ENCODE measurements at regions of chr7 and their contacts with region 1.

Region 1: GRCh38 chr7:1065263-1066260 is 21.2 kb downstream of the GPR146 start:
- DNase-seq: peak; percentile 99
- H3K4me3 ChIP-seq: no peak overlapping the region; a peak in 1 of 4 replicates
- H3K27ac ChIP-seq: no peak overlapping the region
- H3K4me1 ChIP-seq: peaks cover 0 to 9% of the 10 kb centered on the region in 2 experiments; a peak in 1 of 4 replicates
- H3K27me3 ChIP-seq: no peaks in the 10 kb centered on the region
- CTCF ChIP-seq: peak; percentile 87
- EP300 ChIP-seq: no peak
- RAD21 ChIP-seq: peak; percentile 93

Region 2: GRCh38 chr7:831596-832166 is 233.9 kb before region 1 on chr7:
- CTCF ChIA-PET with region 1: no interaction called
- POLR2A ChIA-PET with region 1: no interaction called
- DNase-seq: no peak
- H3K4me3 ChIP-seq: peak overlapping the region in 1 of 2 experiments; percentile 27; a peak in 3 of 4 replicates
- H3K27ac ChIP-seq: peak overlapping the region; percentile 29 to 98; a peak in 3 of 4 replicates
- H3K4me1 ChIP-seq: peaks cover 20 to 26% of the 10 kb centered on the region in 2 experiments; a peak in 3 of 4 replicates
- H3K27me3 ChIP-seq: no peaks in the 10 kb centered on the region
- CTCF ChIP-seq: no peak
- EP300 ChIP-seq: peak in 1 of 2 experiments; percentile 71; a peak in 1 of 4 replicates
- RAD21 ChIP-seq: no peak

Region 3: GRCh38 chr7:985915-986741 is 79.4 kb before region 1 on chr7:
- CTCF ChIA-PET with region 1: interaction called, 756 read pairs
- POLR2A ChIA-PET with region 1: no interaction called
- DNase-seq: peak; percentile 70
- H3K4me3 ChIP-seq: no peak overlapping the region
- H3K27ac ChIP-seq: no peak overlapping the region
- H3K4me1 ChIP-seq: peaks cover 0 to 8% of the 10 kb centered on the region in 2 experiments; a peak in 1 of 4 replicates
- H3K27me3 ChIP-seq: no peaks in the 10 kb centered on the region
- CTCF ChIP-seq: no peak
- EP300 ChIP-seq: no peak
- RAD21 ChIP-seq: no peak

Region 4: DNA sequence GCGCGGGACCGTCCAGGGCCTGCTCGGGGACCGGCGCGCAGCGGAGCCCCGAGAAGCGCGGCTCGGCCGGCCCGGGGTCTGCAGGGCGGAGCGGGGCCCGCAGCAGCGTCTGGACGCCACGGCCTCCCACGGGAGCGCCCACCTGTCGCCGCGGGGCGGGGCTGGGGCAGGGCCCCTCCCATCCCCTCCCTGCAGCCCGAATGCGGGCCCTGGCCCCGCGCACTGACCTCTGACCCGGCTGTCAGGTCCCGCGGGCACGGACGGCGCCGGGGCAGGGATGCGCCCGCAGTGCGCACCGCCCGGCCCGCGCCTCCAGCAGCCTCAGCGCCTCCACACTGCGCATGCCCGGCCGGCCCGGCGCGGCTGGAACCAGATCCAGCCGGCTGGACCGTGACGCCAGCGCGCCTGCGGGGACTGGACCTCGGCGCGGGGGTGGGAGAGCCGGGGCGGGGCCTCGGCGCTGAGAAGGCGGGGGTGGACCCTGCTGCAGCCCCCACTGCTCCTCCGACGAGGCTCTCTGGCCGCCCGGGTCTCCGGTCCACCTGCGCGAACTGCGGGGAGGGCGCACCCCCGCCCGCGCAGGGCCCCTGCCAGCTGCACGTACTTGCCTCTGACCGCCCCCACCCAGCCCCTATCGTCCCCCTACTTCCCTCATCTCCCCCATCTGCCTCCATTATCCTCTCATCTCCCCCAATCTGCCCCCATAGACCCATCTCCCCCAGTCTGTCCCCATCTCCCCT is 37.4 kb before region 1 on chr7:
- CTCF ChIA-PET with region 1: interaction called, 46 read pairs
- POLR2A ChIA-PET with region 1: no interaction called
- DNase-seq: peak; percentile 100
- H3K4me3 ChIP-seq: peak overlapping the region; percentile 74 to 93
- H3K27ac ChIP-seq: peak overlapping the region; percentile 70 to 75
- H3K4me1 ChIP-seq: peaks cover 11 to 14% of the 10 kb centered on the region in 2 experiments; a peak in 3 of 4 replicates
- H3K27me3 ChIP-seq: no peaks in the 10 kb centered on the region
- CTCF ChIP-seq: no peak
- EP300 ChIP-seq: no peak
- RAD21 ChIP-seq: no peak

Region 5: GRCh38 chr7:1086588-1087464 is 21.3 kb after region 1 on chr7:
- CTCF ChIA-PET with region 1: interaction called, 58 read pairs
- POLR2A ChIA-PET with region 1: interaction called, 3 read pairs
- DNase-seq: peak; percentile 94
- H3K4me3 ChIP-seq: peak overlapping the region; percentile 33 to 62
- H3K27ac ChIP-seq: peak overlapping the region in 1 of 2 experiments; percentile 31; a peak in 1 of 4 replicates
- H3K4me1 ChIP-seq: peaks cover 25 to 44% of the 10 kb centered on the region in 2 experiments
- H3K27me3 ChIP-seq: no peaks in the 10 kb centered on the region
- CTCF ChIP-seq: peak; percentile 99
- EP300 ChIP-seq: no peak
- RAD21 ChIP-seq: peak; percentile 60

Region 6: GRCh38 chr7:1137510-1138167 is 72.1 kb after region 1 on chr7:
- CTCF ChIA-PET with region 1: interaction called, 33 read pairs
- POLR2A ChIA-PET with region 1: interaction called, 3 read pairs
- DNase-seq: no peak
- H3K4me3 ChIP-seq: peak overlapping the region; percentile 68 to 90
- H3K27ac ChIP-seq: peak overlapping the region; percentile 1 to 70; a peak in 2 of 4 replicates
- H3K4me1 ChIP-seq: peaks cover 4 to 19% of the 10 kb centered on the region in 2 experiments; a peak in 2 of 4 replicates
- H3K27me3 ChIP-seq: no peaks in the 10 kb centered on the region
- CTCF ChIP-seq: no peak
- EP300 ChIP-seq: no peak
- RAD21 ChIP-seq: no peak

Region 7: GRCh38 chr7:1159891-1160668 is 94.5 kb after region 1 on chr7 and contains the start of gene ZFAND2A:
- CTCF ChIA-PET with region 1: interaction called, 15 read pairs
- POLR2A ChIA-PET with region 1: no interaction called
- DNase-seq: peak; percentile 100
- H3K4me3 ChIP-seq: peak within 1 kb of the TSS; percentile 91 to 97
- H3K27ac ChIP-seq: peak within 1 kb of the TSS; percentile 81 to 94
- H3K4me1 ChIP-seq: peaks cover 14 to 16% of the 10 kb centered on the region in 2 experiments
- H3K27me3 ChIP-seq: no peaks in the 10 kb centered on the region
- CTCF ChIP-seq: no peak
- EP300 ChIP-seq: peak in 1 of 2 experiments; percentile 87; a peak in 2 of 4 replicates
- RAD21 ChIP-seq: no peak
- polyA plus RNA-seq, gene ZFAND2A: 38.9 and 48.5 TPM in 2 replicates

Region 8: DNA sequence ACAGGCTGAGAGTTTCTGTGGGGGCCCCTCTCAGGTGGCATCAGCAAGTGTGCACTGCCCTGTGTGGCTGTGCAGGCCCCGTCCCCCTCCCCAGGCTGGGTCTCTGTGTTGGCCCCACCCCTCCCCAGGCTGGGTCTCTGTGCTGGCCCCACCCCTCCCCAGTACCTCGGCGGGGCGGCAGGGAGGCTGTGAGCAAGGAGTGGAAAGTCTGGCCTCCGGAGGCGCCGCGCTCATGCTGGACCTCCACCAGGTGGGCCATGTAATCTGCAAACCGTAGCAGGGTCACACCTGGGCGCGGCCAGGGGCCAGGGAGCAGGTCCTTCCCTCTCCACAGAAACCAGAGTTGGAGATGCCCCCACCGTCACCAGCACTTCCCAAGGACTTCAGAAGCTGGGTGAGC is 415.1 kb after region 1 on chr7:
- CTCF ChIA-PET with region 1: no interaction called
- POLR2A ChIA-PET with region 1: no interaction called
- DNase-seq: no peak
- H3K4me3 ChIP-seq: no peak overlapping the region
- H3K27ac ChIP-seq: no peak overlapping the region
- H3K4me1 ChIP-seq: no peaks in the 10 kb centered on the region
- H3K27me3 ChIP-seq: no peaks in the 10 kb centered on the region
- CTCF ChIP-seq: no peak
- EP300 ChIP-seq: no peak
- RAD21 ChIP-seq: no peak

Region 9: DNA sequence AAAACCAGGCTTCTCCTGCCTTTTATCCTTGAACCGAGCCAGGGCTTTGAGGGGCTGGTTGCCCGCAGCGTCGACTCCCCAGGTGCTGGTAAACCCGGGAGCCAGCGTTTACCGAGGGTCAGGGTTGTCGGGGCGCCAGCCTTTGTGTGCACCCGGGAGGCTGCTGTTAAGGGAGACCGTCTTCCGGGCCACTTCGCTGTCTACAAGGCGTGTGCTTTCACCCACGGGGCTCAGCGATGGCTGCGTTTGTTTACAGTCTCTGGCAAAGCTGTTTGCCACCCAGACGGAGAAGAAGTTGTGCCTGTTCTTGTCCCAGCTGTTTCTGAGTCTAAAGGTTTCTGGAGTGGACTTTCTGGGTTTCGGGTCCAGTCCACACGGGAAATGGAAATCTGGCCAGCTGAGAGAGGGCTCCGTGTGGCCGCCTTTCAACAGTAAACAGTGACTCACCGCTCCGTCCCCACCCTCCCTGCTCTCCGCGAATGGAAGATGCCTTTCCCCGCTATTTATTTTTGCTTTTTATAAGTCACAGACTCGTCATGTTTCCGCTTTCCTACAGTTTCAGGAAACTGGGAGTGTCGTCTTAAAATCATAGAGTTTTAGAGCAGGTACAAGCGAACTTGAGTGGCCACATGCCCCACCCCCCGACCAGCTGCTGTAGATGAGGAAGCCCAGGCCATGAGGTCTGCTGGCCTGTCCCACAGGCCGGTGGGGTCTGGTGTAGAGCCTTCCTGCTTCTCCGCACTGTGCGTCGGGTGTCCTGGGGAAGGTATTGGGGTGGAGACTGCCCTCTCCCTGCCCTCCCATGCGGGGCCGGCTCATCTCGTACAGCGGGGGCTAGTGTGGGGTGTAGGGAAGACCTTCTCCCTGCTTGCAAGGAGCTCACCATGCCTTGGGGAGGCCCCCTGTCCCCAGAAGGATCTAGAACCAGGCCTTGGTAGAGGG is 467.2 kb after region 1 on chr7:
- CTCF ChIA-PET with region 1: no interaction called
- POLR2A ChIA-PET with region 1: no interaction called
- DNase-seq: no peak
- H3K4me3 ChIP-seq: peak overlapping the region; percentile 55 to 66; a peak in 3 of 4 replicates
- H3K27ac ChIP-seq: peak overlapping the region; percentile 36 to 97
- H3K4me1 ChIP-seq: peaks cover 40 to 45% of the 10 kb centered on the region in 2 experiments; a peak in 3 of 4 replicates
- H3K27me3 ChIP-seq: no peaks in the 10 kb centered on the region
- CTCF ChIP-seq: no peak
- EP300 ChIP-seq: peak in 1 of 2 experiments; percentile 35; a peak in 1 of 4 replicates
- RAD21 ChIP-seq: no peak